ENCODE measurements at regions of chr17 and their contacts with region 1.

Region 1: DNA sequence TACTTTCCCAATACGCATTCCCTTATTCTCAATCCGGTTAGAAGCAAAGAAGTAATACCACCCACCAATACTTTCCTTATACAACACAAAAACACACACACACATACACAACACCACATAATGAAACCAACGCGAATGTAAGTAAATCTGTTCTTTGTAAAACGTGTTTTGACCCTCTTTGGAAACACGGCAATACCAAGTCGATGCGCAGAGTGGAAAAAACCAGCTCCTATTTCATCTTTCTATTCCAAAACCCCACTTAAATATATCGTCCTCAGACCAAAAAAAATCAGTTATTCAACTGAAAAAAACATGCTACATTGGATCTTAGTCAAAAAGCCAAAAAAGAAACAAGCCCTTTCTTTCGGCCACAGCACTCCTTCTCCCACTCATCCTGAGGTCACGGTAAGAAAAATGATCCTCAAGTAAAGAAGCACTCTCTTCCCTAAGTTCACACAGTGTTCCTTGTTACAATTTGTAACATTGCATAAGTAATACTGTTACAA is 31.0 kb upstream of the ARL4D start:
- DNase-seq: peak; percentile 90
- H3K4me3 Mint-ChIP-seq: peak overlapping the region; percentile 73
- H3K27ac Mint-ChIP-seq: peak overlapping the region; percentile 100
- H3K4me1 Mint-ChIP-seq: peaks cover 16% of the 10 kb centered on the region
- H3K27me3 Mint-ChIP-seq: no peaks in the 10 kb centered on the region
- CTCF ChIP-seq: no peak

Region 2: GRCh38 chr17:43338886-43339516 is 28.8 kb before region 1 on chr17:
- CTCF ChIA-PET with region 1: interaction called, 4 read pairs
- POLR2A ChIA-PET with region 1: interaction called, 14 read pairs
- intact Hi-C with region 1: no loop called
- DNase-seq: peak; percentile 69
- H3K4me3 Mint-ChIP-seq: no peak overlapping the region
- H3K27ac Mint-ChIP-seq: no peak overlapping the region
- H3K4me1 Mint-ChIP-seq: peaks cover 17% of the 10 kb centered on the region
- H3K27me3 Mint-ChIP-seq: no peaks in the 10 kb centered on the region
- CTCF ChIP-seq: peak; percentile 65

Region 3: GRCh38 chr17:43388359-43389045 is 20.7 kb after region 1 on chr17:
- CTCF ChIA-PET with region 1: interaction called, 30 read pairs
- POLR2A ChIA-PET with region 1: interaction called, 350 read pairs
- intact Hi-C with region 1: loop called (anchors 1 kb)
- DNase-seq: peak; percentile 94
- H3K4me3 Mint-ChIP-seq: peak overlapping the region; percentile 83
- H3K27ac Mint-ChIP-seq: peak overlapping the region; percentile 97
- H3K4me1 Mint-ChIP-seq: peaks cover 18% of the 10 kb centered on the region
- H3K27me3 Mint-ChIP-seq: no peaks in the 10 kb centered on the region
- CTCF ChIP-seq: no peak

Region 4: GRCh38 chr17:43418441-43419374 is 50.9 kb after region 1 on chr17:
- CTCF ChIA-PET with region 1: interaction called, 3 read pairs
- POLR2A ChIA-PET with region 1: interaction called, 30 read pairs
- intact Hi-C with region 1: no loop called
- DNase-seq: peak; percentile 94
- H3K4me3 Mint-ChIP-seq: peak overlapping the region; percentile 59
- H3K27ac Mint-ChIP-seq: peak overlapping the region; percentile 76
- H3K4me1 Mint-ChIP-seq: peaks cover 41% of the 10 kb centered on the region
- H3K27me3 Mint-ChIP-seq: no peaks in the 10 kb centered on the region
- CTCF ChIP-seq: no peak

Region 5: GRCh38 chr17:43456661-43457361 is 89.0 kb after region 1 on chr17:
- CTCF ChIA-PET with region 1: no interaction called
- POLR2A ChIA-PET with region 1: interaction called, 11 read pairs
- intact Hi-C with region 1: no loop called
- DNase-seq: peak; percentile 91
- H3K4me3 Mint-ChIP-seq: no peak overlapping the region
- H3K27ac Mint-ChIP-seq: peak overlapping the region; percentile 63
- H3K4me1 Mint-ChIP-seq: peaks cover 21% of the 10 kb centered on the region
- H3K27me3 Mint-ChIP-seq: no peaks in the 10 kb centered on the region
- CTCF ChIP-seq: no peak

Region 6: DNA sequence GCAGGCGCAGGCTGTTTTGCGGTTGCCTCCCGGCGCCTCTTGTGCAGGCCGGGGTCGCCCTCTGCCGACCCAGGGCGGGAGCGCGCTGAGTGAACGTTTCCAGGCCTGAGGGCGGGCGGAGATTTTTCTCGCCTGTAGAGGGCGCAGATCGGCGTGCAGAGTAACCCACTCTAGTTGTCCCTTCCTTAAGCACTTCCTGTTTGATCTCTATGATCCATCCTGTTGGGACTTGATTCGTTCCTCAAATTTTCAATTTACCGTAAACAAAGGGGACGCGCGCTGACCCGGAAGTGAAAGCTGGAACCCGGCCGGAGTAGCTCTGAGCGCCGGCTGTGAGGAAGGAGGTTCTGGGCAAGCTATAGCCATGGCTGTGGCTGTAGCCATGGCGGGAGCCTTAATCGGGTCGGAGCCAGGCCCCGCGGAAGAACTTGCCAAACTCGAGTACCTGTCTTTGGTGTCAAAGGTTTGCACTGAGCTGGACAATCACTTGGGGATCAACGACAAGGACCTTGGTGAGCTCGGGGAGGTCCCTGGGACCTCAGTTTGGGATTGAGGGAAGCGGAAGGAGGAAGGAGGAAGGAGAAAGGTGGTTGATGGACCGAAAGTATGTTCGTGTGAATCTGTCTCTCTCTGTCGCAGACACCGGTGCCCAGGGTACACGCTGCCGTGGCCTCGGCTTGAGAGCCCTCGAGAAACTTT is 116.0 kb after region 1 on chr17 and contains the start of gene DHX8:
- CTCF ChIA-PET with region 1: interaction called, 11 read pairs
- POLR2A ChIA-PET with region 1: interaction called, 105 read pairs
- intact Hi-C with region 1: no loop called
- DNase-seq: peak; percentile 98
- H3K4me3 Mint-ChIP-seq: peak within 1 kb of the TSS; percentile 92
- H3K27ac Mint-ChIP-seq: peak within 1 kb of the TSS; percentile 96
- H3K4me1 Mint-ChIP-seq: peaks cover 8% of the 10 kb centered on the region
- H3K27me3 Mint-ChIP-seq: no peaks in the 10 kb centered on the region
- CTCF ChIP-seq: peak; percentile 100
- total RNA-seq, gene DHX8: 56.9 and 62.1 TPM in 2 replicates